ENCODE measurements at regions of chr21 and their contacts with region 1.

Region 1: DNA sequence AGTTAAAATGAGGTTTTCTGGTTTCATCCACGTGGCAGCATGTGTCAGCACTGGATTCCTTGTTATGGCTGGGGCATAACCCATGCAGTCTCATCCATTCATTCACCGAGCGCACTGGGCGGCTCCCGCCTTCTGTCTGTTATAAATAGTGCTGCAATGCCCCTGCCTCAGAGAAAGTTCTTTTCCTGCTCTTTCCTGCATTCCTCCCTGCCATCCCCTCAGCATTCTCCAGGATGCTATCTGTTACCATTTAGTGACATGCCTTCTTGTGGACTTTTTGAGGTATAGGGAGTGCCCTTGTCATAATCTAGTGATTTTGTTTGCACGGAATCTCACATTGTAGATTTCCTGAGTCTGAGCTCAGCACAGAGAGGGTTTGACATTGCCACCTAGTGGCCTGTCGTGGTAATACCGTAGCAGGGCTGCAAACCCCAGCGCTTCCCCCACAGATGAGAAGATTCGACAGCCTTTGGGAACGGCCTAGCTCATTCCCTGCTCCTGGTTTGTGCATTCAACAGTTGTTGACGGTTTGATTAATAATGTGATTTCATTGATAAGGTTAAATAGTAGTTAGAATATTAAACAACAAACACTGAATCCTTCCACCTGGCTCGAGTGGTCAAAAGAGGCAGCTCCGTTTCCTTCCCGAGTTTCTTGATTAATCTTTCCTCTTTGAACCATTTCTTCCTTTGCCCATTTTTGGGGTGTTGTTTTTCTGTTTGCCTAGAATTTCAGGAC is 46.3 kb downstream of the UMODL1 start:
- DNase-seq: peak; percentile 82
- ATAC-seq: peak; percentile 81
- H3K4me3 ChIP-seq: no peak overlapping the region
- H3K4me3 Mint-ChIP-seq: peak overlapping the region; percentile 38
- H3K27ac ChIP-seq: no peak overlapping the region
- H3K27ac Mint-ChIP-seq: no peak overlapping the region
- H3K4me1 ChIP-seq: peaks cover 42 to 44% of the 10 kb centered on the region in 2 donors
- H3K4me1 Mint-ChIP-seq: peaks cover 51% of the 10 kb centered on the region
- H3K27me3 ChIP-seq: peaks cover 0 to 63% (median 26%) of the 10 kb centered on the region in 4 experiments
- H3K27me3 Mint-ChIP-seq: peaks cover 37% of the 10 kb centered on the region
- CTCF ChIP-seq: peak; percentile 96

Region 2: GRCh38 chr21:40936771-40937261 is 1180.6 kb before region 1 on chr21:
- CTCF ChIA-PET with region 1: no interaction called
- POLR2A ChIA-PET with region 1: no interaction called
- intact Hi-C with region 1: no loop called
- DNase-seq: no peak
- ATAC-seq: no peak
- H3K4me3 ChIP-seq: no peak overlapping the region
- H3K4me3 Mint-ChIP-seq: no peak overlapping the region
- H3K27ac ChIP-seq: no peak overlapping the region
- H3K27ac Mint-ChIP-seq: no peak overlapping the region
- H3K4me1 ChIP-seq: no peaks in the 10 kb centered on the region
- H3K4me1 Mint-ChIP-seq: no peaks in the 10 kb centered on the region
- H3K27me3 ChIP-seq: no peaks in the 10 kb centered on the region
- H3K27me3 Mint-ChIP-seq: no peaks in the 10 kb centered on the region
- CTCF ChIP-seq: no peak

Region 3: GRCh38 chr21:41868062-41868710 is 249.2 kb before region 1 on chr21:
- CTCF ChIA-PET with region 1: interaction called, 4 read pairs
- POLR2A ChIA-PET with region 1: no interaction called
- intact Hi-C with region 1: loop called (anchors 5 kb)
- DNase-seq: peak; percentile 65
- ATAC-seq: peak; percentile 76
- H3K4me3 ChIP-seq: no peak overlapping the region
- H3K4me3 Mint-ChIP-seq: peak overlapping the region; percentile 61
- H3K27ac ChIP-seq: no peak overlapping the region
- H3K27ac Mint-ChIP-seq: no peak overlapping the region
- H3K4me1 ChIP-seq: peaks cover 31 to 41% of the 10 kb centered on the region in 2 donors
- H3K4me1 Mint-ChIP-seq: peaks cover 58% of the 10 kb centered on the region
- H3K27me3 ChIP-seq: no peaks in the 10 kb centered on the region
- H3K27me3 Mint-ChIP-seq: no peaks in the 10 kb centered on the region
- CTCF ChIP-seq: no peak

Region 4: DNA sequence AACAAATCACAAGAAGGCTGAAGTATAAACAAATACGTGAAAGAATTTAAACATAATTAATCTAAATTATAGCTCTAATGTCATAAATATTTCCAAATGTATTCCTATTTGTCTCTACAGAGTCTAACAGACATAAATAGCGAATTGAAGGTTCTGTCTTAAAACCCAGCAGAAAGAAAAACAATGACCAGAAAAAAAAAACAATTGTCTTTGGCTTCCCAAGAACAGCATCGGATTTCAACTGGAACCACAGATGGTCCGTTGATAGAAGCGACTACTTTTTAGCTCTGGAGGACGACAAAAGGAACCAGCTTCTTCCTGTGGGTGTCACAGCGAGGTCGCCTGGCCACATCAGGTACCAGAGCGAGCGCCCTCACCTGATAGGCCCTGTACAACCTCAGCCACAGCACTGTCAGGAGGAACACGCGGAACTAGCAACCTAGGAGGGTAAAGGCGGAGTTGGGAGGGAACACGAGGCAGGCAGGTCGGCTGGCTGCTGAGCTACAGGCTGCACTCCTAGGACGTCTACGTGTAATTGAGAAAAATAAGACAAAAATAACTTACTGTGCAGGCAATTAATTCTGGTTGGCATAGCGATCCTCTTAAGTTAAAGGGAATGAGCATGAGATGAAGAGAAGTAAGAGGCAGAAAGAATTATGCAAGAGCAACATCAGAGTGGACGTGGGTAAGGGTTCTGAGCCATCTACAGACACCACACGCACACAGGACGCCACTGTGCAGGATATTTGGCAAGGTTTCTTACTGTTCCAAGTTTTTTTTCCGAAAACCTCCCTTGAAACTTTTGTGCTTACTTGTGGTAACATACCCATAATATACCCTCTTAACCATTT is 221.5 kb before region 1 on chr21:
- CTCF ChIA-PET with region 1: interaction called, 16 read pairs
- POLR2A ChIA-PET with region 1: no interaction called
- intact Hi-C with region 1: no loop called
- DNase-seq: peak; percentile 71
- ATAC-seq: peak; percentile 93
- H3K4me3 ChIP-seq: no peak overlapping the region
- H3K4me3 Mint-ChIP-seq: no peak overlapping the region
- H3K27ac ChIP-seq: peak overlapping the region in 1 of 2 donors; percentile 8
- H3K27ac Mint-ChIP-seq: peak overlapping the region; percentile 29
- H3K4me1 ChIP-seq: peaks cover 7 to 10% of the 10 kb centered on the region in 2 donors
- H3K4me1 Mint-ChIP-seq: peaks cover 13% of the 10 kb centered on the region
- H3K27me3 ChIP-seq: no peaks in the 10 kb centered on the region
- H3K27me3 Mint-ChIP-seq: no peaks in the 10 kb centered on the region
- CTCF ChIP-seq: no peak

Region 5: DNA sequence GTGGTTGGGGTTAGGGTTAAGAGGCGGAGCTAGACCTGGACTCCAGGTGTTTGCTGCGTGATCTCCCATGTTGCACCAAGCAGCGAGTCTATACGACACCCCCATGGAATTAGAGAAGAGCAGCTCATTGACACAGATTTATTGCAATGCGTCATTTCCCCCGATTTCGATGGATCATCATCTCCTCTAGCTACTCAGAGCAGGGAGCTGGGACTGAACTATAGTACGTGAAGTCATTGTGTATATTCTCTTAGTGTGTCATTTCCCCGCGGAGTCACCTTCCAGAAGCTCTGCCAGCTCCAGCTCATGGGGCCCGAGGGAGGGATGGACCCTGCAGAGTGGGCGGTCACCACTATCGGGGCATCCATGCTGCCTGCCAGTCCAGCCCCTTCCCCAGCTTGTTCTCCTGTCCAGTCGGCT is 156.1 kb before region 1 on chr21:
- CTCF ChIA-PET with region 1: interaction called, 3 read pairs
- POLR2A ChIA-PET with region 1: no interaction called
- intact Hi-C with region 1: loop called (anchors 5 kb)
- DNase-seq: no peak
- ATAC-seq: no peak
- H3K4me3 ChIP-seq: no peak overlapping the region
- H3K4me3 Mint-ChIP-seq: no peak overlapping the region
- H3K27ac ChIP-seq: no peak overlapping the region
- H3K27ac Mint-ChIP-seq: no peak overlapping the region
- H3K4me1 ChIP-seq: peaks cover 9 to 17% of the 10 kb centered on the region in 2 donors
- H3K4me1 Mint-ChIP-seq: peaks cover 21% of the 10 kb centered on the region
- H3K27me3 ChIP-seq: peaks cover 0 to 24% (median 6%) of the 10 kb centered on the region in 4 experiments
- H3K27me3 Mint-ChIP-seq: peaks cover 48% of the 10 kb centered on the region
- CTCF ChIP-seq: no peak

Region 6: GRCh38 chr21:42009831-42010523 is 107.4 kb before region 1 on chr21 and contains the start of gene ZBTB21:
- CTCF ChIA-PET with region 1: interaction called, 57 read pairs
- POLR2A ChIA-PET with region 1: interaction called, 10 read pairs
- intact Hi-C with region 1: loop called (anchors 1 kb)
- DNase-seq: peak; percentile 99
- ATAC-seq: peak; percentile 78
- H3K4me3 ChIP-seq: peak within 1 kb of the TSS; percentile 48 to 90 (median 74)
- H3K4me3 Mint-ChIP-seq: peak within 1 kb of the TSS; percentile 98
- H3K27ac ChIP-seq: peak within 1 kb of the TSS; percentile 99
- H3K27ac Mint-ChIP-seq: peak within 1 kb of the TSS; percentile 100
- H3K4me1 ChIP-seq: peaks cover 3 to 6% of the 10 kb centered on the region in 2 donors
- H3K4me1 Mint-ChIP-seq: peaks cover 31% of the 10 kb centered on the region
- H3K27me3 ChIP-seq: no peaks in the 10 kb centered on the region
- H3K27me3 Mint-ChIP-seq: no peaks in the 10 kb centered on the region
- CTCF ChIP-seq: no peak
- total RNA-seq, gene ZBTB21: 39.0 and 40.1 TPM in 2 replicates

Region 7: GRCh38 chr21:42187976-42188653 is 70.7 kb after region 1 on chr21:
- CTCF ChIA-PET with region 1: no interaction called
- POLR2A ChIA-PET with region 1: no interaction called
- intact Hi-C with region 1: no loop called
- DNase-seq: peak; percentile 85
- ATAC-seq: peak; percentile 97
- H3K4me3 ChIP-seq: peak overlapping the region in 3 of 5 experiments; percentile 11 to 32 (median 28)
- H3K4me3 Mint-ChIP-seq: peak overlapping the region; percentile 69
- H3K27ac ChIP-seq: peak overlapping the region; percentile 78 to 81
- H3K27ac Mint-ChIP-seq: peak overlapping the region; percentile 91
- H3K4me1 ChIP-seq: peaks cover 35 to 50% of the 10 kb centered on the region in 2 donors
- H3K4me1 Mint-ChIP-seq: peaks cover 50% of the 10 kb centered on the region
- H3K27me3 ChIP-seq: no peaks in the 10 kb centered on the region
- H3K27me3 Mint-ChIP-seq: no peaks in the 10 kb centered on the region
- CTCF ChIP-seq: no peak

Region 8: GRCh38 chr21:42400525-42400924 is 283.1 kb after region 1 on chr21:
- CTCF ChIA-PET with region 1: no interaction called
- POLR2A ChIA-PET with region 1: no interaction called
- intact Hi-C with region 1: no loop called
- DNase-seq: no peak
- ATAC-seq: peak; percentile 41
- H3K4me3 ChIP-seq: no peak overlapping the region
- H3K4me3 Mint-ChIP-seq: no peak overlapping the region
- H3K27ac ChIP-seq: no peak overlapping the region
- H3K27ac Mint-ChIP-seq: no peak overlapping the region
- H3K4me1 ChIP-seq: peaks cover 4 to 5% of the 10 kb centered on the region in 2 donors
- H3K4me1 Mint-ChIP-seq: peaks cover 22% of the 10 kb centered on the region
- H3K27me3 ChIP-seq: peaks cover 0 to under 1% (median 0%) of the 10 kb centered on the region in 4 experiments
- H3K27me3 Mint-ChIP-seq: peaks cover 5% of the 10 kb centered on the region
- CTCF ChIP-seq: no peak

Measured in B cell (primary cell).